Left ventricle myocardium superior (tissue), 1 donor: ENCODE measurements at regions of chr16 and their contacts with region 1.

Region 1: GRCh38 chr16:28553776-28554633 is at the start of gene SGF29:
- DNase-seq: peak; percentile 95
- ATAC-seq: peak; percentile 97
- total RNA-seq, gene SGF29: 20.4 TPM

Region 2: GRCh38 chr16:28491970-28492474 is 62.0 kb before region 1 on chr16 and contains the start of gene CLN3:
- intact Hi-C with region 1: loop called (anchors 10 kb)
- DNase-seq: peak; percentile 91
- ATAC-seq: peak; percentile 98
- total RNA-seq, gene CLN3: 13.4 TPM